ENCODE measurements at regions of chr16 and their contacts with region 1.

Region 1: GRCh38 chr16:684067-684794 is at the start of gene JMJD8:
- DNase-seq: peak; percentile 99
- ATAC-seq: peak; percentile 80
- H3K4me3 Mint-ChIP-seq: peak within 1 kb of the TSS; percentile 76
- H3K27ac Mint-ChIP-seq: peak within 1 kb of the TSS; percentile 58
- H3K4me1 Mint-ChIP-seq: peaks cover 40% of the 10 kb centered on the region
- H3K27me3 Mint-ChIP-seq: no peaks in the 10 kb centered on the region
- total RNA-seq, gene JMJD8: 26.1 to 31.4 TPM

Region 2: GRCh38 chr16:117379-118365 is 566.6 kb before region 1 on chr16:
- CTCF ChIA-PET with region 1: no interaction called
- POLR2A ChIA-PET with region 1: no interaction called
- intact Hi-C with region 1: no loop called
- DNase-seq: peak; percentile 79
- ATAC-seq: peak; percentile 82
- H3K4me3 Mint-ChIP-seq: no peak overlapping the region
- H3K27ac Mint-ChIP-seq: no peak overlapping the region
- H3K4me1 Mint-ChIP-seq: peaks cover 10% of the 10 kb centered on the region
- H3K27me3 Mint-ChIP-seq: no peaks in the 10 kb centered on the region

Region 3: DNA sequence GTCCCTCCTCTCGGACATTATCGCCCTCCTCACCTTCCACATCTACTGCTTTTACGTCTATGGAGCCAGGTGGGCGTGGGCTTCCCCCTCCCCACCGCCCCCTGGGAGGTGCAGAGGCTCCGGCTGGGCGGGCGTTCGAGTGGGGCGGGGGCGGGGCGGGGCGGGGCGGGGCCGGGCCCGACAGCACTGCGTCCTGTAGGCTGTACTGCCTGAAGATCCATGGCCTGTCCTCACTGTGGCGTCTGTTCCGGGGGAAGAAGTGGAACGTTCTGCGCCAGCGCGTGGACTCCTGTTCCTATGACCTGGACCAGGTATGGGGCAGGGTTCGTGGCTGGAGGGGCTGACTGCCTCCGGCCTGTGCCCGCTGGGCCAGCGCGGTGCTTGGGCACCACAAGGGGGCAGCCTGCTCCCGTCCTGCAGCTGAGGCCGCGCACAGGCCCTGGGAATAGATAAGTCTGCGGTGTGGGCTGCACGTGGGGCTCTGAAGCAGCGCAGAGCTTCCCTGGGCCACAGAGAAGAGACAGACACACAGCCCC is 105.3 kb before region 1 on chr16:
- CTCF ChIA-PET with region 1: no interaction called
- POLR2A ChIA-PET with region 1: no interaction called
- intact Hi-C with region 1: loop called in 1 of 2 experiments (anchors 1 kb)
- DNase-seq: peak; percentile 85
- ATAC-seq: peak; percentile 94
- H3K4me3 Mint-ChIP-seq: no peak overlapping the region
- H3K27ac Mint-ChIP-seq: no peak overlapping the region
- H3K4me1 Mint-ChIP-seq: no peaks in the 10 kb centered on the region
- H3K27me3 Mint-ChIP-seq: no peaks in the 10 kb centered on the region

Region 4: GRCh38 chr16:641302-642188 is 42.7 kb before region 1 on chr16 and contains the start of gene MCRIP2:
- CTCF ChIA-PET with region 1: interaction called, 4 read pairs
- POLR2A ChIA-PET with region 1: no interaction called
- intact Hi-C with region 1: loop called (anchors 1 to 5 kb)
- DNase-seq: peak; percentile 85
- ATAC-seq: peak; percentile 60
- H3K4me3 Mint-ChIP-seq: peak within 1 kb of the TSS; percentile 75
- H3K27ac Mint-ChIP-seq: no peak within 1 kb of the TSS
- H3K4me1 Mint-ChIP-seq: peaks cover 18% of the 10 kb centered on the region
- H3K27me3 Mint-ChIP-seq: no peaks in the 10 kb centered on the region
- total RNA-seq, gene MCRIP2: 28.5 to 44.0 TPM

Region 5: DNA sequence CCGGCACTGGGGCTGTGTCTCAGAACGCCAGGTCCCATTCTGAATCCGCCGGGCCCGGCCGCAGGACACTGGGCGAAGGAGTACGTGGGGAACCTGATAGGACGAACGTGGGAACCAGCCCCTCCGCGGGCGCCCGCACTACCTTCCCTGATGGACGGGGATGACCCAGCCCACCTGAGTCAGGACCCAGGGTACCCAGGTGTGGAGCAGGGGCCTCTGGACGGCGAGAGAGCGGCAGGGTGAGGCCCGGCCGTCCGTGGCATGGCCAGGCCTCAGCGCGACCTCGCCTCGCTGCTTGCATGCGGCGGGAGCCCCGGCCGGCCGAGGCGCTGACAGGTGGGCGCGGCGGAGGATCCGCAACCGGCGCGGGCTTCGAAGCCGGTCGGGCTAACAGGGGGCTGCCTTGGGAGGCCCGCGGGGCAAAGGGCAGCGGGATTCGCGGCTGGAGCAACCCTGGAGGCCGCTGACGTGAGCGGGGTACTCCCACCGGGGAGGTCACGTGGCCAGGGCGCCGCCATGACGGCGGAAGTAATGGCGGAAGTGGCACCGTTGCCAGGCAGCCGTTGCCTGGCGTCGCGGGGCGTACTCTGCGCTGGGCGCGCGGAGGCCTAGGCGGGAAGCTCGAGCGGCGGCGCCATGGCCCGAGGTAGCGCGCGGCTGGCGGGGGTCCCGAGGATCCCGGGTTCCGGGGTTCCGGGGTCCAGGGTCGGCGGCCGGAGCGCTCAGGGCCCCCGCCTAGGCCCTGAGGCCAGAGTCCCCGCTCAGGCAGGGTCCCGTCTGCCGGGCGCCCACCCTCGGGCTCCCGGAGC is 35.2 kb before region 1 on chr16 and contains the start of gene WDR90:
- CTCF ChIA-PET with region 1: no interaction called
- POLR2A ChIA-PET with region 1: no interaction called
- intact Hi-C with region 1: loop called in 1 of 2 experiments (anchors 1 kb)
- DNase-seq: peak; percentile 96
- ATAC-seq: peak; percentile 92
- H3K4me3 Mint-ChIP-seq: peak within 1 kb of the TSS; percentile 81
- H3K27ac Mint-ChIP-seq: peak within 1 kb of the TSS; percentile 73
- H3K4me1 Mint-ChIP-seq: peaks cover 15% of the 10 kb centered on the region
- H3K27me3 Mint-ChIP-seq: no peaks in the 10 kb centered on the region
- total RNA-seq, gene WDR90: 43.6 to 55.9 TPM

Region 6: DNA sequence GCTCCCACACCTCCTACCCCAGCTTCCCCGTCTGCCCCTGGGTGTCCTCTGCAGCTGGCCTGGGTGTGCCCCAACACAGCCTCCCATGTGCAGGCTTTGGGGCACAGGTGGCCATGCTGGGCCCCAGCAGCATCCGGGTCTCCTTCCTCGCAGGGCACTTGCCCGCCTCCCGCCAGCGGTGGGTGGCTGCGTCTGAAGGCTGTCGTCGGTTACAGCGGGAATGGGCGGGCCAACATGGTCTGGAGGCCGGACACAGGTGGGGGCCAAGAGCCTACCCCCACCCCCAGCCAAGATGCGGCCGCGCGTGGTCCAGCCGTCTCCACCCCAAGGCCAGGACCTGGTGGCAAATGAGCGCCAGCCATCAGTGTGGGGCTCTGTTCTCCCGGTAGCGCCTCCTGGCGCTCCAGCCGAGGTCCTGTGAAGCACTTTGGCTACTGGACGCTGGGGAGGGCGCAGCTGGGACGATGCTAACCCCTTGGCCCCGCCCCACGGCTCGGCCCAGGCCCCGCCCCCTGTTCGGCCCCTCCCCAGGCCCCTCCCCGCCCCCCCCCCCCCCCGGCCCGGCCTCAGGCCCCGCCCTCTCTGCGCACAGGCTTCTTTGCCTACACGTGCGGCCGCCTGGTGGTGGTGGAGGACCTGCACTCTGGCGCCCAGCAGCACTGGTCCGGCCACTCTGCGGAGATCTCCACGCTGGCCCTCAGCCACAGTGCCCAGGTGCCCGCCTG is 23.6 kb before region 1 on chr16:
- CTCF ChIA-PET with region 1: no interaction called
- POLR2A ChIA-PET with region 1: no interaction called
- intact Hi-C with region 1: loop called in 1 of 2 experiments (anchors 1 kb)
- DNase-seq: peak; percentile 87
- ATAC-seq: peak; percentile 85
- H3K4me3 Mint-ChIP-seq: peak overlapping the region; percentile 35
- H3K27ac Mint-ChIP-seq: peak overlapping the region; percentile 60
- H3K4me1 Mint-ChIP-seq: peaks cover 5% of the 10 kb centered on the region
- H3K27me3 Mint-ChIP-seq: no peaks in the 10 kb centered on the region

Region 7: DNA sequence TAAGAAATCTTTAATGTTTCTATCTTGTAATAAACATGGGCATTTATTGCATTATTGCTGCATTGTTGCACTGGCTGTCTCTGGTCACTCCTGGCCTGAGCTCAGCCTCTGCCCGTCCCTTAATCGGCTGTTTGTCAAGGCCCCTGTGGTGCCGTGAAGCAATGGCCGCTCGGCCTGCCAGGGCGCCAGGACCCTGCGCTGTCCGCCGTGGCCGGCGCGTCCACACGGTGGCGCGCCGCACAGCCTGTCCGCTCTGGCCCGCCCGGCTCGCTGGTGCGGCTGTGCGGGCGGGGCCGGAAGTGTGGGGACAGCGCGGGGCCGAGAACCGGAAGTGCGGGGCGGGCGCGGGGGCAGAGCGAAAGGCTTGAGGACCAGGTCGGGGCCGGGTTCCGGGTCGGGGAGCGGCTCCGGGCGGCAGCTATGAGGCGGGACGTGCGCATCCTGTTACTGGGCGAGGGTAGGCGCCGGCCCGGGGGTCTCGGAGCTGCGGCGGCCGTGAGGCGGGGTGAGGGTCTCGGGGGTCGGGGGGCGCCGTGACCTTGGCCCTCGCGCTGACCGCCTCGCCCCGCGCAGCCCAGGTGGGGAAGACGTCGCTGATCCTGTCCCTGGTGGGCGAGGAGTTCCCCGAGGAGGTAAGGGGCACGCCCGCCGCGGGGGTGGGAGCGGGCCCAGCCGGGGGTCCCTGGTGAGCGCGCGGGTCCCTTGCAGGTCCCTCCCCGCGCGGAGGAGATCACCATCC is 16.3 kb before region 1 on chr16 and contains the start of gene RHOT2:
- CTCF ChIA-PET with region 1: no interaction called
- POLR2A ChIA-PET with region 1: no interaction called
- intact Hi-C with region 1: loop called in 1 of 2 experiments (anchors 1 kb)
- DNase-seq: peak; percentile 96
- ATAC-seq: peak; percentile 98
- H3K4me3 Mint-ChIP-seq: peak within 1 kb of the TSS; percentile 76
- H3K27ac Mint-ChIP-seq: peak within 1 kb of the TSS; percentile 85
- H3K4me1 Mint-ChIP-seq: peaks cover 6% of the 10 kb centered on the region
- H3K27me3 Mint-ChIP-seq: no peaks in the 10 kb centered on the region
- total RNA-seq, gene RHOT2: 123 to 130 TPM

Region 8: GRCh38 chr16:720990-721764 is 36.9 kb after region 1 on chr16 and contains the start of gene ANTKMT:
- CTCF ChIA-PET with region 1: interaction called, 3 read pairs
- POLR2A ChIA-PET with region 1: no interaction called
- intact Hi-C with region 1: loop called (anchors 1 to 5 kb)
- DNase-seq: peak; percentile 86
- ATAC-seq: peak; percentile 72
- H3K4me3 Mint-ChIP-seq: peak within 1 kb of the TSS; percentile 76
- H3K27ac Mint-ChIP-seq: peak within 1 kb of the TSS; percentile 78
- H3K4me1 Mint-ChIP-seq: peaks cover 16% of the 10 kb centered on the region
- H3K27me3 Mint-ChIP-seq: peaks cover 3% of the 10 kb centered on the region
- total RNA-seq, gene ANTKMT: 13.3 to 27.0 TPM

Region 9: DNA sequence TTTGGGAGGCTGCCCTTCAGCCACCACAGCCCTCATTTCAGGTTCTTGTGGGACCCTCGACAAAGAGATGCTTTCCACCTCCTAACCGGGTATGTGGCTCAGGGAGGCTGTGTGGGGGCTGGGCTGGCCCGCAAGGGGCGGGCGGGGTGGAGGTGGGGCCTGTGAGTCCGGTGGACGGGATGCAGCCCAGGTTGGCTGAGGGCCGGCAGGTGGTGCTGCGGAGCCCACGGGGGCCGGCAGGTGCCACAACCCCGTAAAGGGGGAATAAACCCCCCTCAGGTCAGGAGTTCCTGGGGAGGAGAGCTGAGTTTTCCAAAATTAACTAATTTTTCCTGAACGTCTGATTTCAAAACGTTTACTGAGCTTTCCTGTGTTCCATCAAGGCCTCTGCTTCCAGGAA is 61.5 kb after region 1 on chr16:
- CTCF ChIA-PET with region 1: no interaction called
- POLR2A ChIA-PET with region 1: no interaction called
- intact Hi-C with region 1: no loop called
- DNase-seq: peak; percentile 56
- ATAC-seq: no peak
- H3K4me3 Mint-ChIP-seq: no peak overlapping the region
- H3K27ac Mint-ChIP-seq: no peak overlapping the region
- H3K4me1 Mint-ChIP-seq: no peaks in the 10 kb centered on the region
- H3K27me3 Mint-ChIP-seq: no peaks in the 10 kb centered on the region

Region 10: GRCh38 chr16:2267913-2268666 is 1583.9 kb after region 1 on chr16 and contains the start of gene RNPS1:
- CTCF ChIA-PET with region 1: no interaction called
- POLR2A ChIA-PET with region 1: no interaction called
- intact Hi-C with region 1: no loop called
- DNase-seq: peak; percentile 98
- ATAC-seq: peak; percentile 86
- H3K4me3 Mint-ChIP-seq: peak within 1 kb of the TSS; percentile 92
- H3K27ac Mint-ChIP-seq: peak within 1 kb of the TSS; percentile 96
- H3K4me1 Mint-ChIP-seq: peaks cover 34% of the 10 kb centered on the region
- H3K27me3 Mint-ChIP-seq: no peaks in the 10 kb centered on the region
- total RNA-seq, gene RNPS1: 327 to 445 TPM

Measured in activated CD4-positive, alpha-beta T cell treated with anti-CD3 and anti-CD28 coated beads for 36 hours (primary cell).